Activated CD4-positive, alpha-beta T cell treated with anti-CD3 and anti-CD28 coated beads for 36 hours (primary cell): ENCODE measurements at regions of chr10 and their contacts with region 1.

Region 1: DNA sequence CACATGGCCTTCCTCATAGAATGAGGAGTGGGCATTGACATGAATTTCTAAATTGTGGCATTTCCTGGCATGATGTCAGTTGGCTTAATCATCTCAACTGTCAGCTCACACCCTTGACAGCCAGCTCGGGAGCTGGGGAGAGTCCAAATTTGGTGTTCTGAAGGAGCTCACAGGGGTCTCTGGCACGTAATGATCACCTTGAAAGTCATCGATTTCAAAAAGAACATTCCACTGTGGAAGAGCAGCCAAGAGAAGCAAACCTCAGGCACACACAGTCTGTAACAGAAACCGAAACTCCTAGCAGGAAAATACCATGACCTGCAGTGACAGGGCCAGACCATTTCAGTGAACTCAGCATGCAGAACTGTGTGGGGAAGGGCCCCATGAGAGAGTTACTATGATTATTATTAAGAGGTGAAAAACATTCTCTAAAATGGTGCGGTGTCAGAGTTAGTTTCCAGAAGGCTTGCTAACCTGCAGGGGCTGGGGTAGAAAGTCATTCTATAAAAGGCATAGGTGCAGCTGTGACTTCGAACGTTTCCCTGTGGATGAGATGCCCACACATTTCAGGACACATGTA is 26.4 kb upstream of the KLF6 start:
- DNase-seq: peak; percentile 78
- ATAC-seq: peak; percentile 62
- H3K4me3 Mint-ChIP-seq: peak overlapping the region; percentile 42
- H3K27ac Mint-ChIP-seq: no peak overlapping the region
- H3K4me1 Mint-ChIP-seq: peaks cover 80% of the 10 kb centered on the region
- H3K27me3 Mint-ChIP-seq: no peaks in the 10 kb centered on the region

Region 2: DNA sequence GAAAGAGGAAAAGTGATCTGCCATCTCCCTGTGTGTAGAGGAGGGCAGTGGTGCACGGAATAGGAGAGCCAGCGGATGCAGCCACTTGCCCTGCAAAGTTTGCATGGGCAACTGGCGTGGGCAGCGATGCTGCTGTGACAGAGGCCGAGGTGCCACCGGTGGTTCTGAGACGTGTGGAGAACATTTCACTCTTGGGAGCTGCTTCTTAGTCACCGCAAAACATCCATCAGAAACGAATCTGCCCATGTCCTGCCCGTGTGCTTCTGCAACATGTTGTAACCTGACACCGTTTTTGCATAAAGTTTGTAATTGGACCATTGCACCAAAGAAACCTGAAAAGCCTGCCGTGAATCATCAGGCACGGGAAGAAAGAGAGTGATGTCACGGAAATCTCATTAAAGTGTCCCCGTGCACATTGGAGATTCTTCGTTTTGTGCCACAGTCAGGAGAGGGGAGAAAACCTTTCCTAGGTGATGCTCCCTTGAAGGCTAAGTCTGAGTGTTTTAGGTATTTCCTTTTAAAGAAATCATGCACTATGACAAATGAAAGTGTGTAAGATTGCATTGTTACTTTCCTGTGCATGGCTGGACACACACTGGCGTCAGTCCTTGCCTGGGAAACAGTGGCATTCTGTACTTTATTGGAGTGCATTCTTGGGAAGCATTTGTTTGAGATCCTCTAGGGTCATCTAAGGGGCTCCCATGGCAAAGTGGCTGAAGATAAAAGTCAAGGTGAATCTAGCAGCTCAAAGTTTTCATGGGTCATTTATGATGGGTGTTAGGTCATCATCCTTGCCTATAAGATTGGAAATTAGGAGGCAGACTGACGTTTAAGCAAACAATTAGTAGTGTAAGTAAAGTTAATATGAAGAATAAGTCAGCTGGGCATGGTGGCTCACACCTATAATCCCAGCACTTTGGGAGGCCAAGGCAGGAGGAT is 328.9 kb before region 1 on chr10:
- CTCF ChIA-PET with region 1: no interaction called
- POLR2A ChIA-PET with region 1: no interaction called
- intact Hi-C with region 1: no loop called
- DNase-seq: peak; percentile 18
- ATAC-seq: peak; percentile 28
- H3K4me3 Mint-ChIP-seq: no peak overlapping the region
- H3K27ac Mint-ChIP-seq: no peak overlapping the region
- H3K4me1 Mint-ChIP-seq: peaks cover 42% of the 10 kb centered on the region
- H3K27me3 Mint-ChIP-seq: no peaks in the 10 kb centered on the region

Region 3: DNA sequence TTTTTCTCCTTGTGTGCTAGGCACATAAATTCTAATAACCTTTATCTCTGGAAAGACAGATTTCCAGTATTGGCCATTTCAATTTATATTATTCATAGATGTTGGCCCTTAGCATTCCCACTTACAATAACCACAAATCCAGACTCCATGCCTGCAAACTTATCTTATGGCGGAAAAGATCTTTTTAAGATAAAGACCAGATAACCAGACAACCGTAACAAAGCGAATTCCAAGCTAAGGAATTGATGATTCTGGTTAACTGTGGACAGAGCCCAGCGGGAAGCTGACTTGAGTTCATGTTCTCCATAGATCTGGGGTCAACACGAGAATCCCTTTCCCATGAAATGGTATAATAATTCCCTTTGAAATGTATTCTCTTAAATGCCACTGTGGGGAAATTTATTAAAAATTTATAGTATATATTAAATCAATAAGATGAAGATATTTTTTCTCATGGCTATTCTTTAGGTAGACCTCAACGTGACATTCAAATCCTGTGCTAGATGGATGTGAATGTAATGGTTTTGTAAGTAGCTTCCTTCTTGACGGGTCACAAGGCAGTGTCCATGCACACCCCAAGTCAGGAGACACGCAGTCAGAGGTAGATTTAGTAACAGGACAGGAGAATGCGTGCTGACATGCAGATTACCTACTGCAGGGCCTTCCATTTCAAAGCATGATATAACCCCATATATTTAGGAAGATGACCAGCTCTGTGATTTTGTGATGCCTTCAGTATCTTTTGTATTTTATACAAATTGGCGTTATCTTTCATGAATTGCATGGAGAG is 11.4 kb after region 1 on chr10:
- CTCF ChIA-PET with region 1: no interaction called
- POLR2A ChIA-PET with region 1: no interaction called
- intact Hi-C with region 1: loop called in 1 of 2 experiments (anchors 1 kb)
- DNase-seq: no peak
- ATAC-seq: no peak
- H3K4me3 Mint-ChIP-seq: no peak overlapping the region
- H3K27ac Mint-ChIP-seq: no peak overlapping the region
- H3K4me1 Mint-ChIP-seq: peaks cover 21% of the 10 kb centered on the region
- H3K27me3 Mint-ChIP-seq: no peaks in the 10 kb centered on the region

Region 4: DNA sequence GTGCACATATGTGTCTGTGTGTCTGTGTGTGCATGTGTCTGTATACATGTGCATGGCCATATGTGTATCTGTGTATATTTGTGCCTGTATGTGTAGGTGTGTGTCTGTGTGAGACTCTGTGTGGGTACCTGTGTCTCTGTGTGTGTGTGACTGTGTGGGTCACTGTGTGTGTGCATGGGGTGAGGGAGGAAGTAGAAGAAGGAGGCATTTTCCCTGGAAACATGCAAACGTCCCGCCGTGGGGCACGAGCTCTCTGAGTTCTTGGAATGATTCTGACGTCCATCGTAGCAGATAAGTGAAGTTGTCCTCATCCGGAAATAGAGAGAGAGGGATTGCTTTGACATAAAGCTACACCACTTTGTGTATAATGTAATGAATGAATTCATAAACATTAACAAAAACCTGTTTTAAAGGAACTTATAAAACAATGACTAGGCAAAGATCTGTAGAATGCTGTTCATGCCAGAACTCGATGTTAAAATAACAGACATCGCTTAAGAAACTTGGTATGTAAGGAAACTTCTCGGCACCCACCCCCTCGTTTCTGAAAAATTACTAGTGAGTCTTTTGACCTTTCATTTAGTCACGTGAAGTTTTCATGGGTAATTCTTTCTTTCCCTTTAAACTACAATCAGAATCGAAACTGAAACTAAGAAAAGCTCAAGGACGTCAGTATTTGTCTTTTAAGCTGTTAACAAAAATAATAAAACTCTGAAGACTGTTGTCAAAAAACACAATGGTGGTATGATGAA is 17.2 kb after region 1 on chr10:
- CTCF ChIA-PET with region 1: interaction called, 8 read pairs
- POLR2A ChIA-PET with region 1: interaction called, 26 read pairs
- intact Hi-C with region 1: loop called (anchors 1 kb)
- DNase-seq: peak; percentile 77
- ATAC-seq: peak; percentile 62
- H3K4me3 Mint-ChIP-seq: peak overlapping the region; percentile 56
- H3K27ac Mint-ChIP-seq: peak overlapping the region; percentile 98
- H3K4me1 Mint-ChIP-seq: peaks cover 63% of the 10 kb centered on the region
- H3K27me3 Mint-ChIP-seq: no peaks in the 10 kb centered on the region

Region 5: DNA sequence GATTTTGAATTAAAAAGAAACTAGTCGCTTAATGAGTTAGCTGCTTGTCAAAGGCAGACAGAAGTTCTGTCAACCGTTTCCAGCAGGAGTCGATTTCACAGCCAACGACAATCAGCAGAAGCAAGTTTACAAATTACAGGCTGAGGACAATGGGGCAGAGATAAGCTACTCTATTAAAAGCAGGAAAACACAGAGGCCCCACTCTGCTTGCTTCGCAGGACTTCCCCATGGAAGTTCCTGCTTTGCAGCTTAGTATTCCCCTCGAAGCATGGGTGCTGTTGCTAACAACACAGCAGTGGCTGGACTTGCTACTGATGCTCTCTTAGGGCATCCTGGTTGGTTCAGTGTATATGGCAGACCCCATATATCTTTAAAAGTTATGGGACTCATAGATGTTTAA is 24.4 kb after region 1 on chr10:
- CTCF ChIA-PET with region 1: interaction called, 3 read pairs
- POLR2A ChIA-PET with region 1: interaction called, 15 read pairs
- intact Hi-C with region 1: loop called in 1 of 2 experiments (anchors 2 kb)
- DNase-seq: no peak
- ATAC-seq: peak; percentile 7
- H3K4me3 Mint-ChIP-seq: no peak overlapping the region
- H3K27ac Mint-ChIP-seq: peak overlapping the region; percentile 61
- H3K4me1 Mint-ChIP-seq: peaks cover 63% of the 10 kb centered on the region
- H3K27me3 Mint-ChIP-seq: no peaks in the 10 kb centered on the region

Region 6: DNA sequence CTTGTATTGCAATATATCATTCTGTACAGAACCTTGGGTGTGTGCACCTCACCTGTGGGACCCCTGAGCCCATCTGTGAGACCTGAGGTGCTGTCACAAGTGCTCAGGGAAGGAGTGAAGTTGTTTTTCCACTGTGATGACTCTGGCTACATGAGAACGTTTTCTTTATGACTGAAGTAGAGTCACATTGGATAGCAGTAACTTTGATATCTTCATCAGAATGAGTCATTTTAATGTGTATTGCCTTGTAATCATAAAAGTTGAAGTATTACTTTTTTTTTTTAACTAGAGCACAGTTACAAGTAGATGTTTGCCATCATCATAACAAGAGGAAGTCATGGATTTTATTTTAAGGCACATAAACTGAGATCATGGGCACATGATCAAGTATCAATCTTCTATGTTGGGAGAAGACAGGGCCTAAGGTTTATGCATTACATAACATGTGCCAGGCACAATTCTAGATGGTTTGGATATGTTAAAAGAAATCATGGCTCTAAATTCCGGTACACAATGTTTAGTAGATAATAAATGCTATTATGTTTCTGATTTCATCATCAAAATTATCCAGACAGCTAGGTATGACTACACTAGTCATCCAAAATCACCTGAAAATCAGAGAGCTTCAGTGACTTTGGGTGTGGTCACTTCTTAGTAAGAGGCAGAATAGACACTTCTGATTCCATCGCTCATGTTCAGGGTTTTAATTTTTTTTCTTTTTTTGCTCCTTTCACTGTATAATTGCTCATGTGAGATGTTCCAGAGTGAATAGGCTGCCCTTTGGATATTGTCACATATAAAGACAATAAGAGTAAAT is 56.3 kb after region 1 on chr10:
- CTCF ChIA-PET with region 1: interaction called, 5 read pairs
- POLR2A ChIA-PET with region 1: interaction called, 32 read pairs
- intact Hi-C with region 1: loop called (anchors 1 kb)
- DNase-seq: peak; percentile 60
- ATAC-seq: peak; percentile 76
- H3K4me3 Mint-ChIP-seq: peak overlapping the region; percentile 10
- H3K27ac Mint-ChIP-seq: peak overlapping the region; percentile 81
- H3K4me1 Mint-ChIP-seq: peaks cover 69% of the 10 kb centered on the region
- H3K27me3 Mint-ChIP-seq: no peaks in the 10 kb centered on the region

Region 7: DNA sequence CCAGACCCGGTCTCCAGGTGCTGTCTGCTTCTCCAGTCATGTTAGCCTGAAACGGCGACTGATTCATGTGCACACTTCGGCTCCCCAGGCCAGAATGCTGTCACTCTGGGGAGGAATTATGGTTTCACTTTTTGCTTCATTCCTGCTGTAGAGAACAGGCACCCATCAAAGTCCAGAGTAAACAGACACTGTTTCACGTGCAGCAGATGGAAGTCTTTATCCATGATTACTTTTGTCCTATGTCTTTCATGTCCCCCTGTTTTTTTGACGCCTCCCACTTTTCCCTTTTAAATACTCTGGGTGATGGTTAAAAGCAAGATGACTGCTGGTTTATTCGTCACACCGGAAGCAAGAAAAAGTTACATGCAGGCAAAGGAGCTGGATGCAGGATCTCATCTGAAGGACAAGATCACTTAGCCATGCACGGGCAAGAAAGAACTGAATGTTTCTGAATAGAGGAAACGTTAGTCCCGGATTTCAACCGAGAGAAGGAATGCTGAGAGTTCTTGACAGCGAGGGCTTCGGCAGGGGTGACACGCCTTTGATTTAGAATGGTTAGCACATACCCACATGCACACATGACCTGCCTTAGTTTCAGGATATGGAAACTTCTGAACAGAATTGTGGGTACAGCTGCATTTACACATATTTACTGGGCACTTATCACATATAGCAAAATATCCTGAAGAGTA is 223.7 kb after region 1 on chr10:
- CTCF ChIA-PET with region 1: no interaction called
- POLR2A ChIA-PET with region 1: no interaction called
- intact Hi-C with region 1: loop called in 1 of 2 experiments (anchors 2 kb)
- DNase-seq: peak; percentile 64
- ATAC-seq: peak; percentile 63
- H3K4me3 Mint-ChIP-seq: peak overlapping the region; percentile 49
- H3K27ac Mint-ChIP-seq: peak overlapping the region; percentile 90
- H3K4me1 Mint-ChIP-seq: peaks cover 30% of the 10 kb centered on the region
- H3K27me3 Mint-ChIP-seq: no peaks in the 10 kb centered on the region